Esophagus muscularis mucosa (tissue), 4 donors: ENCODE measurements at regions of chr5 and their contacts with region 1.

Region 1: GRCh38 chr5:5638211-5638610 is 215.7 kb downstream of the ICE1 start:
- DNase-seq: no peak
- H3K4me3 ChIP-seq: no peak overlapping the region
- H3K27ac ChIP-seq: peak overlapping the region; percentile 79 to 84 (median 81)
- H3K4me1 ChIP-seq: peaks cover 14 to 37% (median 30%) of the 10 kb centered on the region in 4 donors
- H3K27me3 ChIP-seq: no peaks in the 10 kb centered on the region
- CTCF ChIP-seq: no peak
- EP300 ChIP-seq: no peak
- POLR2A ChIP-seq: no peak

Region 2: GRCh38 chr5:5572010-5572865 is 66.0 kb before region 1 on chr5:
- intact Hi-C with region 1: loop called (anchors 5 kb)
- DNase-seq: peak; percentile 91
- H3K4me3 ChIP-seq: peak overlapping the region; percentile 26 to 38 (median 32)
- H3K27ac ChIP-seq: peak overlapping the region; percentile 84 to 92 (median 90)
- H3K4me1 ChIP-seq: peaks cover 5 to 33% (median 28%) of the 10 kb centered on the region in 4 donors
- H3K27me3 ChIP-seq: no peaks in the 10 kb centered on the region
- CTCF ChIP-seq: no peak
- EP300 ChIP-seq: no peak
- POLR2A ChIP-seq: no peak

Region 3: GRCh38 chr5:5983261-5983980 is 345.2 kb after region 1 on chr5:
- intact Hi-C with region 1: no loop called
- DNase-seq: peak; percentile 24
- H3K4me3 ChIP-seq: no peak overlapping the region
- H3K27ac ChIP-seq: no peak overlapping the region
- H3K4me1 ChIP-seq: peaks cover 0 to 3% (median 0%) of the 10 kb centered on the region in 4 donors
- H3K27me3 ChIP-seq: no peaks in the 10 kb centered on the region
- CTCF ChIP-seq: no peak
- EP300 ChIP-seq: no peak
- POLR2A ChIP-seq: no peak